ENCODE measurements at regions of chr11 and their contacts with region 1.

Region 1: DNA sequence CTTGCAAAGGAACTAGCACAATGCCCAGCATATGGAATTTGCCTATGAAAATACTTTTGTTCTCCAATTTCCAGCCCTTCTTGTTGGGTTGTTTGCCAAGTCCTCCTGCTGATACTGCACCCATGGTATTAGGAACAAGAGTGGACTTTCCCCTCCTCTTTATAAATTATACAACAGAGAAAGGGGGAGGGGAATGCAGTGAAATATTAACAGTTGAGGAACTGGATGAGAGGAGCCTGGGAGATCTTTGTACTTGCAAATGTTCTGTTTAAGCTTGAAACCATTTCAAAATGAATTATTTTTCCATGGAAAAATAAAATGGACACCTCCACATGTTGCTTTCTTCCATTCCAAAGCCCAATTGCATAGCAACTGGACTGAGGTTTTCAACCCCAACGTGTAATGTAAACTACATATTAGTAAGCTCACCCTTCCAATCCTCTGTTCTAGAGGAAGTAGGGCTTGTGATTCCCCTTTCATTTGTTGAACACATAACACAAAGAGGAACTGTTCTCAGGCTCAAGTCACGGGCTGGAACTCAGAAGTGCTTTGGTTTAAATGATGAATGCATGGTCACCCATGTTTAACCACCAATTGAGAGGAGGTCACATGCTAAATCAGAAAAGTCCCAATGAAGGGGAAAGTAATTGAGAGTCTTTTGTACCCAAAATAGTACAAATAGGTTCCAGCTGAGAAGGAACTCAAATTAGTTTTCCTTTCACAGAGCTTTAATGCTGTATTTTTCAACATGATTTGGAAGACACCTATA is 66.2 kb upstream of the ZC3H12C start:
- DNase-seq: peak; percentile 99
- ATAC-seq: peak; percentile 87
- H3K4me3 ChIP-seq: peak overlapping the region; percentile 23; the same call in 1 of the 2 replicates
- H3K27ac ChIP-seq: peak overlapping the region; percentile 91
- H3K4me1 ChIP-seq: peaks cover 33% of the 10 kb centered on the region
- H3K27me3 ChIP-seq: no peaks in the 10 kb centered on the region
- CTCF ChIP-seq: no peak
- EP300 ChIP-seq: peak; percentile 99
- POLR2A ChIP-seq: no peak
- RAD21 ChIP-seq: peak; percentile 29; the same call in 1 of the 2 replicates

Region 2: DNA sequence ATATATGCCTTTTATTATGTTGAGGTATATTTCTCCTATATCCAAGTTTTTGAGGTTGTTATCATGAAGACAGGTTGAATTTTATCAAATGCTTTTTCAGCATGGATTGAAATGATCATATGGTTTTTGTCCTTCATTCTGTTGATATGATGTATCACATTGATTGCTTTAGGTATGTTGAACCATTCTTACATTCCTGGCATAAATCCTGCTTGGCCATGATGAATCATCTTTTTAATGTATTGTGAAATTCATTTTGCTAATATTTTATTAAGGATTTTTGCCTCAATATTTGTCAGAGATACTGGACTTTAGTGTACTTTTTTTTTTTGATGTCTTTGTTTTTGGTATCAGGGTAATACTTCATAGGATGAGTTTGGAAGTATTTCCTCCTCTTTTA is 888.8 kb before region 1 on chr11:
- CTCF ChIA-PET with region 1: no interaction called
- POLR2A ChIA-PET with region 1: no interaction called
- RAD21 ChIA-PET with region 1: no interaction called
- SMC1A ChIA-PET with region 1: no interaction called
- in situ Hi-C with region 1: no loop called
- intact Hi-C with region 1: no loop called
- DNase-seq: no peak
- ATAC-seq: no peak
- H3K4me3 ChIP-seq: no peak overlapping the region
- H3K27ac ChIP-seq: no peak overlapping the region
- H3K4me1 ChIP-seq: no peaks in the 10 kb centered on the region
- H3K27me3 ChIP-seq: no peaks in the 10 kb centered on the region
- CTCF ChIP-seq: no peak
- EP300 ChIP-seq: no peak
- POLR2A ChIP-seq: no peak
- RAD21 ChIP-seq: no peak

Region 3: GRCh38 chr11:109680127-109680526 is 346.9 kb before region 1 on chr11:
- CTCF ChIA-PET with region 1: no interaction called
- POLR2A ChIA-PET with region 1: no interaction called
- RAD21 ChIA-PET with region 1: no interaction called
- SMC1A ChIA-PET with region 1: no interaction called
- in situ Hi-C with region 1: no loop called
- intact Hi-C with region 1: no loop called
- DNase-seq: no peak
- ATAC-seq: no peak
- H3K4me3 ChIP-seq: no peak overlapping the region
- H3K27ac ChIP-seq: no peak overlapping the region
- H3K4me1 ChIP-seq: no peaks in the 10 kb centered on the region
- H3K27me3 ChIP-seq: no peaks in the 10 kb centered on the region; a peak in 1 of 4 replicates
- CTCF ChIP-seq: no peak
- EP300 ChIP-seq: no peak
- POLR2A ChIP-seq: no peak
- RAD21 ChIP-seq: no peak

Region 4: DNA sequence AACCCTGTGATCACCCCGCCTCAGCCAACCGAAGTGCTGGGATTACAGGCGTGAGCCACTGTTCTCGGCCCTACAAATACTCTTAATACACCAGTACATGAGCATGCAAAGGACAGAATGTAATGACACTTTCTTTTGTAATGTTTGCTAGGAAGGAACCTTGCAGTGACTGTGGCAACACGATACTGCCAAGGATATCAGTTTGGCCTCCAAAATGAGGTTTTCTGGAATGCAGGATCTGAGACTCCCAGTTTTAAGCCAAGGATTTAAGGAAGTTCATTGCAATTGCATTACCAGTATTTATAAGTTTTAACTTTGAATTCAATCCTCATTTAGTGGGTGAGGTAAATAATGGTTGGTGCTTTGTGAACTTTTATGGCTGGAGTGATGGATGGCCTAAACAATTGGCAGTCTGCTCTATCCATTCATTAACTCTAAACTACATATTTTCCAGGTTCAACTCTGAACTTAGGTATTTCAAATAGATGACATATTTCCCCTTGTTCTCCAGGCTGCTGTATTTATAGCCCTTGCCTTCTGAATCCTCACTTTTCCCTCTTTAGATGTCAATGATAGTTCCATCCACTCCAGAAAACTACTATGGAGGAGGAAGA is 274.7 kb before region 1 on chr11:
- CTCF ChIA-PET with region 1: no interaction called
- POLR2A ChIA-PET with region 1: no interaction called
- RAD21 ChIA-PET with region 1: no interaction called
- SMC1A ChIA-PET with region 1: no interaction called
- in situ Hi-C with region 1: no loop called
- intact Hi-C with region 1: no loop called
- DNase-seq: no peak
- ATAC-seq: no peak
- H3K4me3 ChIP-seq: no peak overlapping the region
- H3K27ac ChIP-seq: no peak overlapping the region
- H3K4me1 ChIP-seq: no peaks in the 10 kb centered on the region
- H3K27me3 ChIP-seq: no peaks in the 10 kb centered on the region
- CTCF ChIP-seq: no peak
- EP300 ChIP-seq: no peak
- POLR2A ChIP-seq: no peak
- RAD21 ChIP-seq: no peak

Region 5: DNA sequence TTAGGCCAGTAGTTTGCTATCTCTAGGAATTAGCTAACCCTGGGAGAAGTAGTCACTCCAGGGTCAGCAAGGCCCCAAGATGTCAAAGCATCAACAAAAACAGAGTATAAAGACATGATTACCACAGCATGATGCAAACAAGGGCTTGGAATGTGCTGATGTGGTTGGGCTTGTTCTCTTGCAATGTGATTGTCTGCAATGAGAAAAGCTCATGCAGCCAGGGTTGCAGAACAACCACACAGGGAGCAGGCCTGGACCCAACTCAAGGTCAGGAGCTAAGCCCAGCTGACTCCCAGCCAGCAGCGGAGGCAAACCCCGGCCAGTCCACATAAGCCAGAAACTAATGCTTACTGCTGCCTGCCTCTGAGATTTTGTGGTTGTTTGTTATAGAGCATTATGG is 66.2 kb before region 1 on chr11:
- CTCF ChIA-PET with region 1: interaction called, 5 read pairs
- POLR2A ChIA-PET with region 1: interaction called, 34 read pairs
- RAD21 ChIA-PET with region 1: interaction called, 108 read pairs
- SMC1A ChIA-PET with region 1: interaction called, 173 read pairs
- in situ Hi-C with region 1: no loop called
- intact Hi-C with region 1: loop called (anchors 2 kb)
- DNase-seq: no peak
- ATAC-seq: no peak
- H3K4me3 ChIP-seq: no peak overlapping the region
- H3K27ac ChIP-seq: no peak overlapping the region
- H3K4me1 ChIP-seq: peaks cover 15% of the 10 kb centered on the region
- H3K27me3 ChIP-seq: no peaks in the 10 kb centered on the region
- CTCF ChIP-seq: no peak
- EP300 ChIP-seq: no peak
- POLR2A ChIP-seq: no peak
- RAD21 ChIP-seq: no peak

Region 6: DNA sequence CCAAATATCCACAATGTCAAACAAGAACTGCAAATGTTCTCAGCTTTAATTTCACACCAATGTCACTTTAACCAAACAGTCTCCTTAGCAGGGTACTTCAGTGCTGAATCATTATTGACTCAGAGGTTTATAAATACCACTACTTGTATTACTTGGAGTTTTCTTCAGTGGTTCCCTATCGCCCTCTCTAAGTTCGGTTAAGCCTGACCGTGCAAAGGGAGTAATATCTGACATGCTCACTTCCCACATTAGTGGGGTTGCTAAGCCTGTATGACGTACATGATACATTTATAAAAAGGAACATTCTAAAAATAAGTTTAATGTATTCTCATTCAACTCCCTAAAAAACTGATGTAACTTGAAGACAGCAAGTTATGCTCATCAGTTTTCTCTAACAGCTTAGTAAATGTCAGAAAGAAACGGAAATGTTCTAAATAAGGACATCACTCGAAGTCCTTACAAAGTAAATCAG is 27.0 kb before region 1 on chr11:
- CTCF ChIA-PET with region 1: interaction called, 21 read pairs
- POLR2A ChIA-PET with region 1: interaction called, 53 read pairs
- RAD21 ChIA-PET with region 1: interaction called, 91 read pairs
- SMC1A ChIA-PET with region 1: interaction called, 118 read pairs
- in situ Hi-C with region 1: no loop called
- intact Hi-C with region 1: loop called (anchors 1 kb)
- DNase-seq: peak; percentile 92
- ATAC-seq: peak; percentile 96
- H3K4me3 ChIP-seq: no peak overlapping the region
- H3K27ac ChIP-seq: peak overlapping the region; percentile 62; the same call in 1 of the 2 replicates
- H3K4me1 ChIP-seq: peaks cover 19% of the 10 kb centered on the region
- H3K27me3 ChIP-seq: no peaks in the 10 kb centered on the region
- CTCF ChIP-seq: no peak
- EP300 ChIP-seq: peak; percentile 100
- POLR2A ChIP-seq: no peak
- RAD21 ChIP-seq: peak; percentile 43; the same call in 1 of the 2 replicates

Region 7: GRCh38 chr11:110046775-110047380 is 19.8 kb after region 1 on chr11:
- CTCF ChIA-PET with region 1: interaction called, 3 read pairs
- POLR2A ChIA-PET with region 1: interaction called, 3 read pairs
- RAD21 ChIA-PET with region 1: interaction called, 8 read pairs
- SMC1A ChIA-PET with region 1: interaction called, 13 read pairs
- in situ Hi-C with region 1: no loop called
- intact Hi-C with region 1: no loop called
- DNase-seq: no peak
- ATAC-seq: no peak
- H3K4me3 ChIP-seq: no peak overlapping the region
- H3K27ac ChIP-seq: no peak overlapping the region
- H3K4me1 ChIP-seq: no peaks in the 10 kb centered on the region
- H3K27me3 ChIP-seq: no peaks in the 10 kb centered on the region
- CTCF ChIP-seq: no peak
- EP300 ChIP-seq: no peak
- POLR2A ChIP-seq: no peak
- RAD21 ChIP-seq: no peak

Region 8: DNA sequence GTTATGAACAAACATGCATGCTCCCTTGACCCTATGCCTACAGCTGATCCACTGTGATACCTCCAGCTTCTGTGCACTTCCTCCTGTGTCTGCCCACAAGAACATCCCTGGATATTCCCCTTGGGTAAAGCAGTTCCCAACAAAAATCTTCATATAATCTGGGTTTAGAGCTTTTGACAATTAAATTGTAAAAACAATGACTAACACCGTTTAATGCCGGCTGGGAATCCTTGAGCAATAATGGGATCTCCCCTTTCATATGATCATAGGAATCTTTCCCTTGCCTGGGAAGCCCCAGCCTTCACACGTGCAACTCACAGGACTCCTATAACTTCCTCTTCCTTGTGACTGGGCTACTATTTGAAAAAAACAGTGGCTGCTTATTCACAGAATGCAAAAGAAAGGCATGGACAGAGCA is 59.9 kb after region 1 on chr11:
- CTCF ChIA-PET with region 1: interaction called, 8 read pairs
- POLR2A ChIA-PET with region 1: interaction called, 22 read pairs
- RAD21 ChIA-PET with region 1: interaction called, 50 read pairs
- SMC1A ChIA-PET with region 1: interaction called, 214 read pairs
- in situ Hi-C with region 1: no loop called
- intact Hi-C with region 1: no loop called
- DNase-seq: no peak
- ATAC-seq: 0 out of 3 replicates have a peak, but pooled peaks have one; percentile 3
- H3K4me3 ChIP-seq: no peak overlapping the region
- H3K27ac ChIP-seq: no peak overlapping the region
- H3K4me1 ChIP-seq: peaks cover 10% of the 10 kb centered on the region
- H3K27me3 ChIP-seq: no peaks in the 10 kb centered on the region
- CTCF ChIP-seq: no peak
- EP300 ChIP-seq: no peak
- POLR2A ChIP-seq: no peak
- RAD21 ChIP-seq: no peak

Region 9: GRCh38 chr11:110376711-110377324 is 349.8 kb after region 1 on chr11:
- CTCF ChIA-PET with region 1: interaction called, 3 read pairs
- POLR2A ChIA-PET with region 1: no interaction called
- RAD21 ChIA-PET with region 1: no interaction called
- SMC1A ChIA-PET with region 1: no interaction called
- in situ Hi-C with region 1: no loop called
- intact Hi-C with region 1: loop called (anchors 2 kb)
- DNase-seq: peak; percentile 36
- ATAC-seq: peak; percentile 50
- H3K4me3 ChIP-seq: no peak overlapping the region
- H3K27ac ChIP-seq: no peak overlapping the region
- H3K4me1 ChIP-seq: peaks cover 27% of the 10 kb centered on the region
- H3K27me3 ChIP-seq: no peaks in the 10 kb centered on the region
- CTCF ChIP-seq: peak; percentile 60 to 83 (median 80)
- EP300 ChIP-seq: no peak
- POLR2A ChIP-seq: no peak
- RAD21 ChIP-seq: peak; percentile 83

Measured in GM12878 (cell line).